ENCODE measurements at regions of chr1 and their contacts with region 1.

Region 1: DNA sequence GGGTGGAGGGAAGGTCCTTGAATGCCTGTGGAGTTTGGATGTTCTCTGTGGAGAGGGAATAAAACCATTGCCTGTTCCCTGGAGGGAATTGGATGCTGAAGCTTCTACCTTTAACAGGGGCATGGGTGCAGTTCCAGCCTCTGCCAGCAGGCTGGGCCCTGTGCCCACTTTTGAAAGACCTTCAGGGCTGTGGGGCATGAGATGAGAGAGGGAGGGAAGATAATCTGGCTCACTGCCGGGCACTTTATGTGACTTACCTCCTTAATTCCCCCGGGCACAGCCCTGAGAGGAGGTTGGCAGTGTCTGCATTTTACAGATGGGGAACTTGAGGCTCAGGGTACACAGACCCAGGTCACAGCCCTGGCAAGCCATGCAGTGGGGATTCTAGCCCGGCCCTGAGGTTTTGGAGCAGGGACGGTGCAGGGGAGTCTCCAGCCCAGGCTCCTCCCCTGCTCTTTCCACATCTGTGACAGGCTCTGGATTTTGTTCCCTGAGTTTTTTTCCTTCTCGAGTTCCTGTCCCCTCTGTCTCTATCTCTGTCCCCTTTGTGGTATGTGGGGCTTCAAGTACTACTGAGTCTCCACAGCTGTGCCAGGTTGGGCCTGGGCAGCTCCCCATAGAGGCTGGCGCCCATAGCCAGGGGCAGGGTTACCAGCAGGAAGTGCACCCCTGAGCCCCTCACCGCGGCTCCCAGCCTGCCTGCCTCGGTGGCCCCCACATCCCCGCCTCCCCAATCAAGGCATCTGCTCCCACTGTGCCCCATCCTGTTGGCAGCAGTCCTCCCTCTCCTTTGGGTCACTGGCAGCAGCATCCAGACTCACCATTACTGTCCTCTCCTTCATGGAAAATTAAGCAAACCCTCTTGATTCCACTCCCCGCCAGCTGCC is 14.0 kb upstream of the THEMIS2 start:
- DNase-seq: peak; percentile 85 to 90
- ATAC-seq: peak; percentile 97 to 100 (median 99)
- H3K4me3 ChIP-seq: no peak overlapping the region
- H3K4me3 Mint-ChIP-seq: no peak overlapping the region
- H3K27ac ChIP-seq: no peak overlapping the region
- H3K27ac Mint-ChIP-seq: peak overlapping the region in 1 of 2 donors; percentile 76
- H3K4me1 ChIP-seq: peaks cover 27% of the 10 kb centered on the region
- H3K4me1 Mint-ChIP-seq: peaks cover 6 to 23% of the 10 kb centered on the region in 2 donors
- H3K27me3 ChIP-seq: no peaks in the 10 kb centered on the region
- H3K27me3 Mint-ChIP-seq: no peaks in the 10 kb centered on the region
- CTCF ChIP-seq: peak; percentile 97

Region 2: GRCh38 chr1:27891196-27891889 is 33.0 kb after region 1 on chr1:
- intact Hi-C with region 1: loop called (anchors 5 kb)
- DNase-seq: peak; percentile 48 to 74
- ATAC-seq: peak; percentile 71 to 85 (median 79)
- H3K4me3 ChIP-seq: no peak overlapping the region
- H3K4me3 Mint-ChIP-seq: peak overlapping the region; percentile 62
- H3K27ac ChIP-seq: peak overlapping the region; percentile 90
- H3K27ac Mint-ChIP-seq: peak overlapping the region; percentile 94 to 99
- H3K4me1 ChIP-seq: peaks cover 56% of the 10 kb centered on the region
- H3K4me1 Mint-ChIP-seq: peaks cover 45 to 48% of the 10 kb centered on the region in 2 donors
- H3K27me3 ChIP-seq: no peaks in the 10 kb centered on the region
- H3K27me3 Mint-ChIP-seq: no peaks in the 10 kb centered on the region
- CTCF ChIP-seq: peak; percentile 50

Region 3: GRCh38 chr1:27979151-27979858 is 121.0 kb after region 1 on chr1:
- intact Hi-C with region 1: loop called (anchors 2 kb)
- DNase-seq: peak in 1 of 2 donors; percentile 75
- ATAC-seq: peak; percentile 65 to 86 (median 79)
- H3K4me3 ChIP-seq: no peak overlapping the region
- H3K4me3 Mint-ChIP-seq: no peak overlapping the region
- H3K27ac ChIP-seq: no peak overlapping the region
- H3K27ac Mint-ChIP-seq: no peak overlapping the region
- H3K4me1 ChIP-seq: no peaks in the 10 kb centered on the region
- H3K4me1 Mint-ChIP-seq: no peaks in the 10 kb centered on the region
- H3K27me3 ChIP-seq: no peaks in the 10 kb centered on the region
- H3K27me3 Mint-ChIP-seq: no peaks in the 10 kb centered on the region
- CTCF ChIP-seq: peak; percentile 58

Region 4: DNA sequence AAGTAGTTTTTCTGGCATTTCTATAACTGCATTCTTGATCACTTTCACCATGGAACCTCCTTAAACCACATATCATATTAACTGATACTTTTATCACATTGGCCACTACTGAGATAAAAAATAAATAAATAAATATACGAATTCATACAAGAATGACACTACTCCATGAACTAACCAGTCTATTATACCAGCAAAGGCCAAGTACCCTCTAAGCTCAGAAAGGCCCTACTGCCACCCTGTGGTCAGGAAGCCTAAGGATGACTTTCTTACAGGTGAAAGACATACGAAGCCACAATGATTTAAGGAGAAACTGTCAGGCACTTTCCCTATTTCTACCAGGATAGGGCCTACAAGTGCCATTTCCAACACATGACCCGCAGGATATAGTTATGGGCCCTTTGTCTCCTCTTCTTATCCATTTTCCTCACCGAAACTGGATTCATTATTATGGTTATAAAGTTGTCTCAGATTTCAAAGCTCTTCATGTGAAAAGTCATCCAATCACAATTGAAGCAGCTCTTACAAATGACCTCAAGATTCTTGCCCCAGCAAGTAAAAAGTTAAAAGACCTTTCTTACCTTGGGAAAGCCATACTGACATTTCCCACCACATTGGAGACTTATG is 350.6 kb after region 1 on chr1:
- intact Hi-C with region 1: loop called (anchors 2 kb)
- DNase-seq: peak; percentile 45 to 80
- ATAC-seq: peak; percentile 86 to 98 (median 92)
- H3K4me3 ChIP-seq: no peak overlapping the region
- H3K4me3 Mint-ChIP-seq: no peak overlapping the region
- H3K27ac ChIP-seq: no peak overlapping the region
- H3K27ac Mint-ChIP-seq: peak overlapping the region; percentile 24 to 36
- H3K4me1 ChIP-seq: no peaks in the 10 kb centered on the region
- H3K4me1 Mint-ChIP-seq: peaks cover 10 to 13% of the 10 kb centered on the region in 2 donors
- H3K27me3 ChIP-seq: no peaks in the 10 kb centered on the region
- H3K27me3 Mint-ChIP-seq: no peaks in the 10 kb centered on the region
- CTCF ChIP-seq: peak; percentile 78